ENCODE measurements at regions of chr2 and their contacts with region 1.

Region 1: DNA sequence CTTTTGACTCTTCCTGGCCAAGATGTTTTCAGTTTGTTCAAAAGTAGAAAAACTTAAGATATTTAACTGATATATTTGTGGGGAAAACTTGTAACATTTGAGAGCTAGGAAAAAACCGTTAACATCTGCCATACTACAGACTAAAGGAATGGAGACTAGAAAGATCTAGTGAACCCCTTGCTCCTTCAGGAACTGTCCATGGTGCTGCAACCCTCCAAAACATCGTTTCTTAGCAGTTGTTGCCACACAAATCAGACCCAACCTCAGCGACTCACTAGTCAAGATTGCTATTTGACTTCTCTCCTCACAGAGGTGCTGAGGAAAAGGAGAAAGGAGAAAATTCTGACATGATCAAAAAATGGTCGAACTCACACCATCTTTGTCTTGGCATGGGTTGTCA is 393.8 kb upstream of the LYPD1 start:
- DNase-seq: peak in 10 of 42 donors; percentile 4 to 53 (median 18)

Region 2: DNA sequence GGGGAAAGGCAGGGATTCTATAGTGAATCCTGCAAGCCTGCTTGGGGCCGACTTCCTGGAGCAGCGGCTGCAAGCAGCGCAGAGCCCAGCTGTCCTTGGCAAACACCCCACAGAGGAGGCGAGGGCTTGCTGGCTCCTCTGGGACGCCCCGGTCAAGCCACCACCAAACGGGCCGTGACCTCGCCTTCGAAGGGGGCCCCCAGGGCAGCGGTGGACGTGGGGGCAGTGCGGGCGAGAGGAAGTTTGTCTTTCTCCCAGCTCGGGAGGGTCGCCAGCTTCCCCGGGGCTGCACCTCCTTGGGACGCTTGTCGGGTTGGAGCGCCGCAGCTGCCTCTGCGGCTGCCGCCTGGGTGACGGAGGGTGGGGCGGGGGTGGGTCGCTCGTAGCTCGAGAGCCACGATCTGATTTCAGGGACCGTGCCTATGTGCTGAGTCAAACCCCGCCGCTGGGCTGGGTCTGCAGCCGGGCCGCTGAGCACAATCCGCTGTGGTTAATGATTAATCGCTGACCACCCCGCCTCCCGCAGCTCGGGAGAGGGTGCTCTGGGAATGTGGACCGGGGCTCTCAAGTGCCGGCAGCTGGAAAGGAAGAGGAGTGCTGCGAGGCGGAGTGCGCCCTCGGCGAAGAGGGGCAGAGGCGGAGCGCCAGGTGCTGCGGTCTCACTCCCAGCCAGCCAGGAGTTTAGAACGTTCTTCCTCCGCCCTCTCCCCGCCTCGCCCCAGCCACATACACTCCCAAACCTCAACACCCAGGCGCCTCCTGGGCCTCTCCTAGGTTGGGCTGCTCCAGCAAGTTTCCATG is 647.5 kb before region 1 on chr2 and contains the start of gene GPR39:
- intact Hi-C with region 1: loop called (anchors 5 kb)
- DNase-seq: peak in 41 of 42 donors; percentile 11 to 79 (median 45)